Activated T-helper 1 cell treated with anti-CD3 and anti-CD28 coated beads, Interleukin-12 subunit alpha, Interleukin-12 subunit beta, Interleukin-2, Interleukin-4 antibody, amounts not matched to agents 30 ng/mL and 10 ng/mL and 1 ng/mL, durations not matched to agents 14 hours and 24 hours and 36 hours (primary cell): ENCODE measurements at regions of chr4 and their contacts with region 1.

Region 1: GRCh38 chr4:20684852-20685763 is 15.2 kb upstream of the PACRGL start:
- DNase-seq: no peak
- H3K4me3 Mint-ChIP-seq: no peak overlapping the region
- H3K27ac Mint-ChIP-seq: no peak overlapping the region
- H3K4me1 Mint-ChIP-seq: no peaks in the 10 kb centered on the region
- H3K27me3 Mint-ChIP-seq: peaks cover 7% of the 10 kb centered on the region

Region 2: DNA sequence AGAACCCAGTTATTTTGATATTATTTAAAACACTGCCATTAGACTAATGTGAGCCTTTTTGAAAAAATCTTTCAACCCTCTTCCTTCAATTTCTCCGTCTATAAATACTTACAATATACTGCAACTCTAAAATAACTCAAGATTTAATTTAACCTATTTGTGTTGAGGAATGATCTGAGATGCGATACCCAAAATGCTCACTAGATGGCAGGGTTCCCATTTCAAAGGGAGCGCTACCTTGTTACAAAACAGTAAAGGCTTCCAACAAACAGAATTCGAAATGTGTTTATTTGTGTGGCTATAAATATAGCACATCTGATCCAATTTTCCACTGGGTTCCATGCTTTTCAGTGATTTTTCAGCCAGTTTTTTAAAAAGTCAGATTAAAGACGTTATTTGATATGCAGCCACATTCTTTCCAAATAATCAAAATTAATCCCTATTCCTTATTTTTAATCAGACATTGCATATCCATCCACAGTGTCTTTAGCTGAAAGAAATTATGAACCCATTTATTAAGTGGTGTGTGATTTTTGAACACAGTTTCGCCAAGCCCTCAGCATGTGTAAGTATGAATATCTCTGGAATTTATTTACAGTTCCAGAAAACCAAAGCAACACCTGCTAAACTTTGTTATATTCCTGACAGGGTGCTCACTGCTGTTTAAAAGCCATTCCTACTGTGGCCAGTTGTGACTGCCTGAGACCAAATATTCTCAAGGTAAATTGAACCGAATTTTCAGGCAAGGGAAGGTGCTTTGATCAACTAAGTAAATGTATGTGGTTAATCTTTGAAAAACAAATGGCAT is 1995.6 kb before region 1 on chr4:
- intact Hi-C with region 1: loop called (anchors 1 kb)
- DNase-seq: peak; percentile 3
- H3K4me3 Mint-ChIP-seq: no peak overlapping the region
- H3K27ac Mint-ChIP-seq: no peak overlapping the region
- H3K4me1 Mint-ChIP-seq: no peaks in the 10 kb centered on the region
- H3K27me3 Mint-ChIP-seq: peaks cover 3% of the 10 kb centered on the region

Region 3: DNA sequence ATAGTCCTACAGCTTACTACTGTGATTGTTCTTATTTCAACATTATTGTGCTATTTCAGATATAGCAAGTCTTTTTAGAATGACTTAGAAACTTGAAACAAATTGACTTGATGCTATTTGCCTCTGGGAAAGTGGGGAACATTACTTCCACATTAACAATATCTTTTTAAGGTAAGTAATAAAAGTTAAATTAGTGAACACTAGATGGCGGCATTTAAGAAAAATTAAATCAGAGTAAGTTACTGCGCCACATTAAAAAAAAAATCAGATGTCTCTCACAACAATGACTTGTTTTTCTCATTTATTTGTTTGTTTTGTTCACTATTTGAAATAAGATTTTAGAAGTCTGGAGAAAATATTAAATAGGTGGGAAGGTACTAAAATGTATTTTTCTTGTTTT is 1460.3 kb before region 1 on chr4:
- intact Hi-C with region 1: loop called (anchors 2 kb)
- DNase-seq: no peak
- H3K4me3 Mint-ChIP-seq: no peak overlapping the region
- H3K27ac Mint-ChIP-seq: no peak overlapping the region
- H3K4me1 Mint-ChIP-seq: no peaks in the 10 kb centered on the region
- H3K27me3 Mint-ChIP-seq: no peaks in the 10 kb centered on the region

Region 4: DNA sequence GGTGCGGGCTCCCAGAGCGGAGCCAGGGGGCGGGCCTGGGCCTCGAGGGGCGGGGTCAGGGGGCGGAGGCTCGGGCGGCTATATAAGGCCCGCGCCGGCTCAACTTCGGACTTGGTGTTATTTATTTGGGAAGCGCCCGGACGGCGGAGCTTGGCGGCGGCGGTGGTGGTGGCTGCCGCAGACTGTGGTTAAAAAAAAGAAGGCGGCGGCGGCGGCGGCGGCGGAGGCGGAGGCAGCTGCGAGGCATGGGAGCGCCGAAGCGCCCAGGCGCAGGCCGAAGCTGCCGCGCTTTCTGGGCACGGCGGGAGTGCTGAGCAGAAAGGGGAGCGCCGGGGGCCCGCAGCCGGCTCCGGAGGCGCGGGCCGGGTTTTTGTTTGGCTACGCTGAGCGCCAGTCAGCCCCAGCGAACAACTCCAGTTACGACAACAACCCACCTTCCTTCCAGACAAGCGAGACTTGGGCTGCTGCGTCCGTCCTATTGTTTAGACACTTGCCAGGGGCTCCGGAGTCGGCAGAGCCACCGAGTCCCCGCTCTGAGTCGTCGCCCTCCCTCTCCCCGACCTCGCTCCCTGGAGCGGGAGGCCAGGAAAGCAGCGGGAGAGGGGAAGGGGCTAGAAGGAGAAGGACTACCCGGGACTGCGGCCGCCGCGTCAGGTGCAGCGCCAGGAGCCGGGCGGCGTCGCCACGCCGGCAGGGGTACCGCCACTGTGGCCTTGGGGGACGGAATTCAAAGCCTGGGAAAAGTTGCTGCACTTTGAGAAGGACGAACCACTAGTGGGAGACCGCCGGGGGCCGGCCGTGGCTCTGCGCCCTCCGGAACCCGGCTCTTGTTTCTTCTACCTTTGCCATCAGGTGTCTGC is 433.1 kb before region 1 on chr4 and contains the start of gene SLIT2:
- intact Hi-C with region 1: loop called (anchors 10 kb)
- DNase-seq: no peak
- H3K4me3 Mint-ChIP-seq: peak within 1 kb of the TSS; percentile 30
- H3K27ac Mint-ChIP-seq: peak within 1 kb of the TSS; percentile 55
- H3K4me1 Mint-ChIP-seq: peaks cover 6% of the 10 kb centered on the region
- H3K27me3 Mint-ChIP-seq: peaks cover 44% of the 10 kb centered on the region
- total RNA-seq, gene SLIT2: 0.07 and 0.13 TPM in 2 replicates

Region 5: DNA sequence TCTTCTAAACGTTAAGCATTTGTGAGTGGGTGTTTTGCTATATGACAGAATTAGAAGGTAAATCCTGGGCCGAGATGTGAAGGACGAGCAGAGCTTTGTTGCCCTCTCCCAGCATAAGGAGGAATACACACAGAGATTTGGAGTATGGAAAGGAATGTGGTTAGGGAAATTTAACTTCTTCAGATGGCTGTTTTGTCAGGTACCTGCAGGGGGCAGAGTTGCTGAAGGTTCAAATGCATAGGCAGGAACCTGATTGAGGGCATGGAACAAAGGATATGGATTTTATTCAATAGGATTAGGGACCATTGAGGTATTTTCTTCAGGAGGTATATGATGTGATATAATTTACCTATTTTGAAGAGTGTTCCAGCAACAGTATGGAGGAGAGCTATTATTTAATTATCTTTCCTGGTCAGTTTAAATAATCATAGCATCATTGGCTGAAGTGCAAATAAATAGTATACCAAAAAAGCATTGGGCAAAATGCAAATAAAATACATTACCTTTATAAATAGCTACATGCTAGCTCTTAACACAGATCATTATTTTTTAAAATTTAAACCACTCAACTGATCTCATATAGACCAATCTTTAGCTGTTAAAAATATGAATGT is 289.8 kb before region 1 on chr4:
- intact Hi-C with region 1: loop called (anchors 1 kb)
- DNase-seq: no peak
- H3K4me3 Mint-ChIP-seq: no peak overlapping the region
- H3K27ac Mint-ChIP-seq: no peak overlapping the region
- H3K4me1 Mint-ChIP-seq: no peaks in the 10 kb centered on the region
- H3K27me3 Mint-ChIP-seq: no peaks in the 10 kb centered on the region

Region 6: DNA sequence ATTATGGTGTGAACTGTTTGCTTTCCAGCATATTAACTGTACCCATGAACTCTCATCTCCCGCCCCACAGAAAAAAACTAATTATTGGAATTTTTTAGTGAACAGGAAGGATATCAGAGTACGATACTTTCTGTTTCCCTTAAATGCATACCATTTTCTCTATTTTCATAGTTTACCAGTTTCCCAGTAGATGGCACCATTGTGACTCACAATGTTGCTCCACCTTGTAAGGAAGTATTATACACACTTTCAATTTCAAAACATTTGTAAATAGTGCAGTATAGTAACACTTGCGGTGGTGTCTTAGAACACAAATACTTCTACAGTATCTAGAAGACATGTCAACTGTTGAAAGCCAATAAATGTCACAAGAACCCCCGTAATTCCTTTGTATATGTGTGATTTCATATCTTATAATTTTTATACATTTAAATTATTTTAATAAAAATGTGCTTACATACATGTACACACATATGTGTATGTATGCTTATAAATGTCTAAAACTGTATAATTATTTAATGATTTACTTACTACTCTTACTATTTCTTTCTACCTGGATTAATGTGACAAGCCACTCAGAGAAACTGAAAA is 266.2 kb before region 1 on chr4:
- intact Hi-C with region 1: loop called (anchors 1 kb)
- DNase-seq: no peak
- H3K4me3 Mint-ChIP-seq: peak overlapping the region; percentile 57
- H3K27ac Mint-ChIP-seq: peak overlapping the region; percentile 9
- H3K4me1 Mint-ChIP-seq: peaks cover 5% of the 10 kb centered on the region
- H3K27me3 Mint-ChIP-seq: no peaks in the 10 kb centered on the region